Sigmoid colon (tissue), 7 donors: ENCODE measurements at regions of chr1 and their contacts with region 1.

Region 1: DNA sequence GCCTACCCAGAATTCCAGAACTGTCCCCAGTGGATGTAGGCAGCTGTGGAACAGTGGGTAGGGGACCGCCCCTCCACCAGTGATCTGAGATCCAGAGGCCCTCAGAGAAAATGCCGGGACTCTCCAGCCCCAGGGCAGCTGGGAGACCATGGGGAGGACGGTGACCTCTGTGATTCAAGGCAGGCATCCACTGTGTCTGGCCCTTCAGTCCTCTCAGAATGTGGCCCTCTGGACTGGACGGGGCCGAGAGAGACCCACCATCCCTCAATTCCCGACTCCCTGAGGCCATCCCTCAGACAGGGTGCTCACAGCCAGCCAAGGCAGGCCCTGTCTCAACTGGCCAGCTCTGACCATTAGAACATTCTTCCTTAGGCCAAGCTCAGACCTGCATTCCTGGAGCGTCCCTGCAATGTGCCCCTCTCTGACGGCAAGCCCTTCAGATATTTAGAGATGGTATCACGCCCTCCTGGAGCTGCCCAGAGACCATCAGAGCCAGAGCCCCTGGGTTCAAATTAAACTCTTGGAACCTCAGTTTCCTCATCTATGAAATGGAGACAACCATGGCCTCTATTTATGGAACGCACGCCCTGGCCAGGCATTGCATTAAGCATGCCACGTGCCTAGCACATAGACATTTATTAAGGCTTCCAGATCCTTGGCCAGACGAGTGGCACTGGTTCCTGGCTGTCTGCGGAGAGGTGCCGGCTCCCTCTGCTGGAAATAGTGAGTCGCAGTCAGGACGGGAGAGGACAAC is 9.6 kb upstream of the EPS8L3 start:
- DNase-seq: peak; percentile 94
- H3K4me3 ChIP-seq: no peak overlapping the region
- H3K27ac ChIP-seq: no peak overlapping the region
- H3K4me1 ChIP-seq: peaks cover 0 to 18% (median 9%) of the 10 kb centered on the region in 4 donors
- H3K27me3 ChIP-seq: no peaks in the 10 kb centered on the region
- CTCF ChIP-seq: peak; percentile 80 to 96 (median 88)
- EP300 ChIP-seq: no peak
- POLR2A ChIP-seq: no peak

Region 2: DNA sequence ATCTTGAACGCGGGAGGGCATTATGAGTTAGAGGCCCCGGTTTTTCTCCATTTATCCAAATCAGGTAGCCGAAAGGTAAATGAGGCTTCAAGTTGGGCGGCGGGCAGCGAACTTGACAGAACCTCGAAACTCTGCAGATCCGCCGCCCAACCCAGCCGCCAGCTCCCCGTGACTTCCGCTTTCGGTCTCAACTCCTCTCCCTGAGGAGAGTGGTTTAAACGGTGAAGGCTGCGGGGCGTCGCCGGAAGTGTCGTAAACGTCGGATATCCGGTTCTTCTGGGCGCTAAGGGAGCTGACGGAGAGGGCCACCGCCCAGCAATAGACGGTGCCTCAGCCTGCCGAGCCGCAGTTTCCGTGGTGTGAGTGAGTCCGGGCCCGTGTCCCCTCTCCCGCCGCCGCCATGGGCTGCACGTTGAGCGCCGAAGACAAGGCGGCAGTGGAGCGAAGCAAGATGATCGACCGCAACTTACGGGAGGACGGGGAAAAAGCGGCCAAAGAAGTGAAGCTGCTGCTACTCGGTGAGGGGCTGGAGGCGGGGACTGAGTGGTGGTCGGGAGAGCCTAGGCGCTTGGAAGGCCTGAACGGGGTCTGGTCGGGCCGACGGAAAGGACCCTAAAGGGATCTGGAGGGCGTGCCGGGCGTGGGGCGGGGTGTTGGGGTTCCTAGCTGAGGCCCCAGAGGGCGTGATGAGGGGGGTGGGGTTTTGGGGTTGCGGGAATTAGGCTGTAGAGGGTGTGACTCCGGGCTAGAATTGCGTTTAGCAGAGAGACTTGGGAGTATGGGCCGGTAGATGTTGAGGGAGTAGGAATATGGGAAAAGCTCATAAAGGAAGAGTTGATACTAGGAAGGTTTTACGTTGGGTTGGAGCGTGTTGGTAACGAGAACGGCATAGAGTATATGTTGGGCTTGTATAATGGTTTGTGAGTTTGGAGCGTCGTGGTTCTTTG is 224.7 kb before region 1 on chr1 and contains the start of gene GNAI3:
- intact Hi-C with region 1: loop called (anchors 2 kb)
- DNase-seq: peak; percentile 98
- H3K4me3 ChIP-seq: peak within 1 kb of the TSS; percentile 72 to 94 (median 89)
- H3K27ac ChIP-seq: peak within 1 kb of the TSS; percentile 92 to 97 (median 95)
- H3K4me1 ChIP-seq: peaks cover 0 to 54% (median 40%) of the 10 kb centered on the region in 4 donors
- H3K27me3 ChIP-seq: no peaks in the 10 kb centered on the region
- CTCF ChIP-seq: no peak
- EP300 ChIP-seq: peak in 2 of 4 donors; percentile 6 to 33
- POLR2A ChIP-seq: peak; percentile 96 to 99
- total RNA-seq, gene GNAI3: 5.7 to 6.4 (median 6.1) TPM

Region 3: DNA sequence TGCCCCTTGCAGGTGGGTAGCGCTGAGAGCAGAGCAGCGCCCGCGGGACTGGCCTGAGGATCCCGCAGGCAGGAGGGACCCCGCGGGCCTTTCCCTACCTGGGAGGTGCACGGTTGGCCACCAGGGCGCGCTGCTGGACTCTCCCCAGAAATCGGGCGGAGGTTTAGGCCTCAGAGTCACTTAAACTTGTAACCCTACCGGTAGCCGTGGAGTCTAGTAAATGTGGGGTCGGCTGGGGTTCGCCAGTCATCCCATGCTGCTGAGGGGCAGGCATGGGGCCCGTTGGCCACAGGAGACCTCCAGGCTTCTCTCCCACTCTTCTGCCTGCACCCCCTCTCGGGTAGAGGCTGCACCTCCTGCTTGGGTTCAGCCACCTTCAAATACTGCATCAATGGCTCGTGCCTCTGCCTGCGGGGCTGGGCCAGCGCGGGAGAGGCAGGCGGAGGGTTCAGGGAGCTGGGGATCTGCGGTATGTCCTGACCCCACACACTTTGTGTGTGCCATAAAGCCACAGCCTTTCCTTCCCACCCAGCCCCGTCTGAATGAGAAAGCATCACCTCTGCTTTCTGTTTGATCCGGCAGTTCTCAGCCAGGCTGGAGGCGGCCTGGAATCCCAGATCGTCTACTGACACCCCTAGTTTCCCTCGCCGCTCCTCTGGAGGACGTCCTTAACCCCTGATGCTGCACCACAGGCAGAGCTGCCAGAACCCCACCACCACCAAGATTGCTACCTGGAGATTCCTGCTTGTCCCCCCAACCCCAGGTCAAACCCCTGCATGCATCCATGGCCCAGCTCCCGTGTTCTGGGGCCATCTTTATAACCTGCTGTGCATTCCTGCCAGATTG is 129.7 kb before region 1 on chr1:
- intact Hi-C with region 1: loop called (anchors 5 kb)
- DNase-seq: peak; percentile 92
- H3K4me3 ChIP-seq: peak overlapping the region in 1 of 4 donors; percentile 6
- H3K27ac ChIP-seq: peak overlapping the region in 1 of 4 donors; percentile 30
- H3K4me1 ChIP-seq: peaks cover 0 to 10% (median 8%) of the 10 kb centered on the region in 4 donors
- H3K27me3 ChIP-seq: no peaks in the 10 kb centered on the region
- CTCF ChIP-seq: peak; percentile 75 to 91 (median 86)
- EP300 ChIP-seq: no peak
- POLR2A ChIP-seq: no peak

Region 4: GRCh38 chr1:110011527-110012041 is 238.3 kb after region 1 on chr1:
- intact Hi-C with region 1: no loop called
- DNase-seq: no peak
- H3K4me3 ChIP-seq: no peak overlapping the region
- H3K27ac ChIP-seq: peak overlapping the region in 3 of 4 donors; percentile 12 to 19 (median 14)
- H3K4me1 ChIP-seq: peaks cover 0 to 33% (median 16%) of the 10 kb centered on the region in 4 donors
- H3K27me3 ChIP-seq: no peaks in the 10 kb centered on the region
- CTCF ChIP-seq: peak in 3 of 4 experiments; percentile 18 to 42 (median 30)
- EP300 ChIP-seq: no peak
- POLR2A ChIP-seq: no peak